ENCODE measurements at regions of chr11 and their contacts with region 1.

Region 1: DNA sequence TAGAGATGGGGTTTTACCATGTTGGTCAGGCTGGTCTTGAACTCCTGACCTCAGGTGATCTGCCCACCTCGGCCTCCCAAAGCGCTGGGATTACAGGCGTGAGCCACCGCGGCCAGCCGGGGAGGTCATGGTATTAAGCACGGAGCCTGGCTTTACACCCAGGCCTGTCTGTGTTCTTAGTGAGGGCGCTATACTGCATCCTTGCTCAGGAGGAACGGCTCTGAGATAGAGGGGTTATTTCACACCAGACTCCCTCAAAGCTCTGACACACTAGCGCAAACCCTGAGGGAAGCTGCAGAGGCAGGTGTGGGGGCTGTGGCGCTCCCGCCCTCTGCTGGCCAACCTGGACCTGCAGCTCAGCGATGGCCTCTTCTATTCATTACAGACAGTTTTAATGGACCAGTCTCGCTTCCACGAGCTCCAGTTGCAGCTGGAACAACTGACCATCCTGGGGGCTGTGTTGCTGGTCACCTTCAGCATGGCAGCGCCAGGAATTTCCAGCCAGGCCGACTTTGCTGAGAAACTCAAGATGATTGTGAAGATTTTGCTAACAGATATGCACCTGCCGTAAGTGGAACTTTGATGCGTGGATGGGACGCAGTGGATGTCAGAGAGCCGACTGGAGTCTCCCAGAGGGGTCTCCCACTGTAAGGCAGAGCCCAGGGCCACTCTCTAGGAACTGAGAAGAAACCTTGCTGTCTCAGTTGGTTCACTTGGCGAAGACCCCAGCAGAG is 26.2 kb downstream of the TCP11L1 start:
- DNase-seq: peak; percentile 82
- H3K4me3 Mint-ChIP-seq: no peak overlapping the region
- H3K27ac Mint-ChIP-seq: no peak overlapping the region
- H3K4me1 Mint-ChIP-seq: peaks cover 26% of the 10 kb centered on the region
- H3K27me3 Mint-ChIP-seq: no peaks in the 10 kb centered on the region

Region 2: GRCh38 chr11:32809313-32809712 is 256.3 kb before region 1 on chr11:
- CTCF ChIA-PET with region 1: interaction called, 31 read pairs
- DNase-seq: peak; percentile 69
- H3K4me3 Mint-ChIP-seq: no peak overlapping the region
- H3K27ac Mint-ChIP-seq: no peak overlapping the region
- H3K4me1 Mint-ChIP-seq: no peaks in the 10 kb centered on the region
- H3K27me3 Mint-ChIP-seq: no peaks in the 10 kb centered on the region

Region 3: DNA sequence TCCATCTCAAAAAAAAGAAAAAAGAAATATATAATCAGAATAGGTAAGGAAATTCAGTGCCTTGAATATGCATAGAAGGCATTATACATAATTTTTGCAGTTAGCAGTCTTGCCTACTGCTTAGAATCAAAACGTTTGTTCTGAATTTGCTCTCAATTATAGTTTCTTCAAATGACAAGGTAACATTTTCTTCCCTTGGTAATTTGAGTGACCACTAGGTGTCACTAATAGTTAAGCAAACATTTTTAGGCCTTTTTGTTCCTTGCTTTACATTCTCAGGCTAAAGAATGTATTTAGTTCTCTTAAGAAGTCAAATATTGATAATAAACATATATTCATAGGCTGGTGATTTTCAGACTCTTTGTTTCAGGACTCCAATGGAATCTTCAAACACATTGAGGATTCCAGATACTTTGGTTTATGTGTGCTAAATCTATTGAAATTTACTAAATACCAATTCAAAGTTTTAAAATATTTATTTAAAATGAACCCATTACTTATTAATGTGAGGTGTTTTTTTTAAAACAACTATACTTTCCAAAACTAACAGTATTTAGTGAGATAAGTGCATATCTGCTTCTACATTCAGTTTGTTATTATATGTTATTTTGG is 105.0 kb before region 1 on chr11:
- CTCF ChIA-PET with region 1: interaction called, 128 read pairs
- DNase-seq: no peak
- H3K4me3 Mint-ChIP-seq: no peak overlapping the region
- H3K27ac Mint-ChIP-seq: no peak overlapping the region
- H3K4me1 Mint-ChIP-seq: no peaks in the 10 kb centered on the region
- H3K27me3 Mint-ChIP-seq: no peaks in the 10 kb centered on the region

Region 4: DNA sequence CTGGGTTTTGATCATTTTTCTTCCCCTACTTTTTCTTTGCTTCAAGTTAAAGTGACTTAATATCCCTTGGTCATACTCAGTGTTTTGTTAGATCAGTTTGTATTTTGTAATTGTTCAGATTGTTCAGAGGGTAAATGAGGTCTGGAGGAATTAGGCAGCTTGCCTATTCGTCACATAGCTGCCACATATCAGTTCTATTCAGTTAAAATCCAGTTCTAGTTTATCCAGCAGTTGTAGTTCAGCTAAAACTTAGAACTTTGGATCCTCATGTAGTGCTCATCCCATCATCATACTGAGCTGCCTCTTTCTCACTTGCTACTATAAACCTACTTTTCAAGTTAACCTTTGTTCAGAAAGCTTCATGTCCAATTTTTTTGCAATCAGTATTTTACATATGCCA is 97.1 kb before region 1 on chr11:
- CTCF ChIA-PET with region 1: interaction called, 128 read pairs
- DNase-seq: no peak
- H3K4me3 Mint-ChIP-seq: no peak overlapping the region
- H3K27ac Mint-ChIP-seq: no peak overlapping the region
- H3K4me1 Mint-ChIP-seq: peaks cover 8% of the 10 kb centered on the region
- H3K27me3 Mint-ChIP-seq: no peaks in the 10 kb centered on the region

Region 5: GRCh38 chr11:33110083-33110482 is 44.5 kb after region 1 on chr11:
- CTCF ChIA-PET with region 1: no interaction called
- DNase-seq: no peak
- H3K4me3 Mint-ChIP-seq: no peak overlapping the region
- H3K27ac Mint-ChIP-seq: no peak overlapping the region
- H3K4me1 Mint-ChIP-seq: no peaks in the 10 kb centered on the region
- H3K27me3 Mint-ChIP-seq: no peaks in the 10 kb centered on the region

Measured in activated naive CD4-positive, alpha-beta T cell treated with anti-CD3 and anti-CD28 coated beads, Interleukin-2, amount 10 ng/mL, durations not matched to agents 7 days and 5 days (primary cell).